Gastrocnemius medialis (tissue), 4 donors: ENCODE measurements at regions of chr15 and their contacts with region 1.

Region 1: GRCh38 chr15:35705884-35706585 is 160.1 kb upstream of the DPH6 start:
- DNase-seq: peak in 1 of 2 donors; percentile 42
- ATAC-seq: peak; percentile 99 to 100
- H3K4me3 ChIP-seq: no peak overlapping the region
- H3K27ac ChIP-seq: peak overlapping the region; percentile 63 to 71 (median 64)
- H3K4me1 ChIP-seq: peaks cover 13 to 17% of the 10 kb centered on the region in 2 donors
- H3K27me3 ChIP-seq: no peaks in the 10 kb centered on the region
- CTCF ChIP-seq: no peak
- POLR2A ChIP-seq: no peak

Region 2: DNA sequence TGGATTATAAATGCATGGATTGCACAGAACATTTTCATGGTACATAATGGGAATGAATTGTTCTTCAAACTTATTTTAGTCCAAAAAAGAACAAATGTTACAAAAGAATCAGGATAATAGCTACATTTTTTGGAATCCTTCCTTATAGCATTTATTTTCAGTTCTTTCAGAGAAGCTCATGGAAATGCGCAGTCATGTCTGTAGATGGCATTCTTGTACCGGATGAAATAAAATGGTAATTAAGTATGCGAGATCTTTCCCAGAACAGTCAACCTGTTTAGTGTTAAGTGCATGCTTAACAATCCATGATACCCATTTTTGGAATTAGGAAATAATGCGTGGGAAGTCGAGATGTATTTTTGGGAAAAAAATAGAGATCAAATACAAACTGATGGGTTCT is 1084.4 kb before region 1 on chr15:
- in situ Hi-C with region 1: no loop called
- intact Hi-C with region 1: loop called (anchors 10 kb)
- DNase-seq: no peak
- ATAC-seq: no peak
- H3K4me3 ChIP-seq: no peak overlapping the region
- H3K27ac ChIP-seq: no peak overlapping the region
- H3K4me1 ChIP-seq: peaks cover 0 to 16% of the 10 kb centered on the region in 2 donors
- H3K27me3 ChIP-seq: peaks cover 0 to 5% (median 0%) of the 10 kb centered on the region in 3 donors
- CTCF ChIP-seq: peak in 3 of 5 experiments; percentile 27 to 56 (median 34)
- POLR2A ChIP-seq: no peak

Region 3: GRCh38 chr15:35630526-35630925 is 75.5 kb before region 1 on chr15:
- in situ Hi-C with region 1: no loop called
- intact Hi-C with region 1: loop called (anchors 5 kb)
- DNase-seq: peak; percentile 33 to 58
- ATAC-seq: peak; percentile 97 to 99
- H3K4me3 ChIP-seq: no peak overlapping the region
- H3K27ac ChIP-seq: peak overlapping the region in 3 of 4 donors; percentile 37 to 47 (median 46)
- H3K4me1 ChIP-seq: peaks cover 5 to 10% of the 10 kb centered on the region in 2 donors
- H3K27me3 ChIP-seq: no peaks in the 10 kb centered on the region
- CTCF ChIP-seq: no peak
- POLR2A ChIP-seq: no peak

Region 4: GRCh38 chr15:36271048-36271447 is 565.0 kb after region 1 on chr15:
- in situ Hi-C with region 1: no loop called
- intact Hi-C with region 1: no loop called
- DNase-seq: no peak
- ATAC-seq: no peak
- H3K4me3 ChIP-seq: no peak overlapping the region
- H3K27ac ChIP-seq: no peak overlapping the region
- H3K4me1 ChIP-seq: no peaks in the 10 kb centered on the region
- H3K27me3 ChIP-seq: no peaks in the 10 kb centered on the region
- CTCF ChIP-seq: no peak
- POLR2A ChIP-seq: no peak